Panc1 (cell line): ENCODE measurements at regions of chr17 and their contacts with region 1.

Region 1: GRCh38 chr17:11644261-11645212 is 46.3 kb downstream of the DNAH9 start:
- DNase-seq: peak; percentile 50
- ATAC-seq: no peak
- H3K4me3 ChIP-seq: no peak overlapping the region
- H3K27ac ChIP-seq: no peak overlapping the region
- H3K4me1 ChIP-seq: no peaks in the 10 kb centered on the region
- H3K27me3 ChIP-seq: no peaks in the 10 kb centered on the region
- CTCF ChIP-seq: peak; percentile 88

Region 2: GRCh38 chr17:10875979-10876555 is 768.5 kb before region 1 on chr17:
- CTCF ChIA-PET with region 1: interaction called, 3 read pairs
- POLR2A ChIA-PET with region 1: no interaction called
- in situ Hi-C with region 1: no loop called
- intact Hi-C with region 1: loop called (anchors 10 kb)
- DNase-seq: peak; percentile 30
- ATAC-seq: peak; percentile 63; the same call in 1 of the 2 replicates
- H3K4me3 ChIP-seq: no peak overlapping the region
- H3K27ac ChIP-seq: no peak overlapping the region
- H3K4me1 ChIP-seq: no peaks in the 10 kb centered on the region
- H3K27me3 ChIP-seq: no peaks in the 10 kb centered on the region
- CTCF ChIP-seq: peak; percentile 76

Region 3: DNA sequence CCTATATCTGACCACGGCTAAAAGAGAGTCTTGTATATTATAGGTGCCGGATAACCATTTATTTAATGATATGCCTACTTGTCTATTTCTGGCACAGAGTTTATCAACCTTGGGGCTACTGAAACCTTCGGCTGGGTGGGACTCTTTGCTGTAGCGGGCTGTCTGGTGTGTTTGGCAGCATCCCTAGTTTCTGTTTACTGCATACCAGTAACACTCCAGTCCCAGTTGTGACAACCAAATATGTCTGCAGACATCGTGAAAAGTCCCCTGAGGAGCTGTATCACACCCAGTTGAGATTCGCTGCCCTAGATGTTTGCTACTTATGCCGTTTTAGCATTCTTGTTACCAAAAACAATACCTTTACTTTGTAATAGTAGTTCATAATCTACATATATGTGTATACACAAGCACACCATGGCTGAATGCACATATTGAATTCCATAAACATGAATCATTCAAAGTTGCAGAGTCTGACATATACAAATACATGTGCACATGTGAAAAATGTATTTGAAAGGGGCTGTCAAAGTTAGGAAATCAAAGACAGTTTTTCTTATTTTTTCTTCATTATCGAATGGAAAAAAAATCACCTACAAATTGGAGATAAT is 492.6 kb before region 1 on chr17:
- CTCF ChIA-PET with region 1: interaction called, 13 read pairs
- POLR2A ChIA-PET with region 1: no interaction called
- in situ Hi-C with region 1: no loop called
- intact Hi-C with region 1: no loop called
- DNase-seq: no peak
- ATAC-seq: no peak
- H3K4me3 ChIP-seq: no peak overlapping the region
- H3K27ac ChIP-seq: no peak overlapping the region
- H3K4me1 ChIP-seq: no peaks in the 10 kb centered on the region
- H3K27me3 ChIP-seq: no peaks in the 10 kb centered on the region
- CTCF ChIP-seq: no peak

Region 4: DNA sequence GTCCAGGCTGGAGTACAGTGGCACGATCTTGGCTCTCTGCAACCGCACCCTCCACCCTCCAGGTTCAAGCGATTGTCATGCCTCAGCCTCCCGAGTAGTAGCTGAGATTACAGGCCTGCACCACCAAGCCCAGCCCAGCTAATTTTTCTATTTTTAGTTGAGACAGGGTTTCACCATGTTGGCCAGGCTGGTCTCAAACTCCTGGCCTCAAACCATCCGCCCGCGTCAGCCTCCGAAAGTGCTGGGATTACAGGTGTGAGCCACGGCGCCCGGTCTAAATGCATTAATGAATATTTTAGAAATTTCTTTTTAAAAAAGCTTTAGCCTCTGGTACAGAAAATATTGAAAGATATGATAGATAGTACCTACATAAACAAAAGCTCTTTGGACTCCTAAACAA is 48.7 kb after region 1 on chr17:
- CTCF ChIA-PET with region 1: interaction called, 10 read pairs
- POLR2A ChIA-PET with region 1: no interaction called
- in situ Hi-C with region 1: no loop called
- intact Hi-C with region 1: no loop called
- DNase-seq: no peak
- ATAC-seq: no peak
- H3K4me3 ChIP-seq: no peak overlapping the region
- H3K27ac ChIP-seq: no peak overlapping the region
- H3K4me1 ChIP-seq: no peaks in the 10 kb centered on the region
- H3K27me3 ChIP-seq: no peaks in the 10 kb centered on the region
- CTCF ChIP-seq: no peak